MCF 10A (cell line): ENCODE measurements at regions of chr3 and their contacts with region 1.

Region 1: GRCh38 chr3:155884291-155884690 is 13.8 kb downstream of the GMPS start:
- DNase-seq: no peak
- H3K4me3 Mint-ChIP-seq: no peak overlapping the region
- H3K27ac Mint-ChIP-seq: peak overlapping the region; percentile 4
- H3K4me1 Mint-ChIP-seq: peaks cover 28% of the 10 kb centered on the region
- H3K27me3 Mint-ChIP-seq: no peaks in the 10 kb centered on the region
- CTCF ChIP-seq: no peak

Region 2: GRCh38 chr3:155870133-155870944 is 14.0 kb before region 1 on chr3 and contains the start of gene GMPS:
- CTCF ChIA-PET with region 1: interaction called, 4 read pairs
- POLR2A ChIA-PET with region 1: interaction called, 19 read pairs
- intact Hi-C with region 1: no loop called
- DNase-seq: peak; percentile 93
- H3K4me3 Mint-ChIP-seq: peak within 1 kb of the TSS; percentile 84
- H3K27ac Mint-ChIP-seq: peak within 1 kb of the TSS; percentile 64
- H3K4me1 Mint-ChIP-seq: peaks cover 18% of the 10 kb centered on the region
- H3K27me3 Mint-ChIP-seq: no peaks in the 10 kb centered on the region
- CTCF ChIP-seq: peak; percentile 28
- total RNA-seq, gene GMPS: 92.4 and 128 TPM in 2 replicates